Heart left ventricle (tissue), 16 donors: ENCODE measurements at regions of chr13 and their contacts with region 1.

Region 1: GRCh38 chr13:43387880-43388731 is 364.7 kb downstream of the DNAJC15 start:
- DNase-seq: no peak
- ATAC-seq: peak in 2 of 4 donors; percentile 32 to 54
- H3K4me3 ChIP-seq: no peak overlapping the region
- H3K27ac ChIP-seq: no peak overlapping the region
- H3K4me1 ChIP-seq: peaks cover 0 to 10% (median 2%) of the 10 kb centered on the region in 12 donors
- H3K27me3 ChIP-seq: no peaks in the 10 kb centered on the region
- CTCF ChIP-seq: no peak
- POLR2A ChIP-seq: no peak

Region 2: GRCh38 chr13:43094901-43095300 is 293.2 kb before region 1 on chr13:
- intact Hi-C with region 1: no loop called
- DNase-seq: no peak
- ATAC-seq: no peak
- H3K4me3 ChIP-seq: no peak overlapping the region
- H3K27ac ChIP-seq: peak overlapping the region in 1 of 12 donors; percentile 30
- H3K4me1 ChIP-seq: peaks cover 0 to 24% (median 11%) of the 10 kb centered on the region in 12 donors
- H3K27me3 ChIP-seq: no peaks in the 10 kb centered on the region
- CTCF ChIP-seq: no peak
- POLR2A ChIP-seq: no peak

Region 3: GRCh38 chr13:43464578-43465264 is 76.6 kb after region 1 on chr13:
- intact Hi-C with region 1: loop called in 1 of 10 experiments (anchors 2 kb)
- DNase-seq: no peak
- ATAC-seq: no peak
- H3K4me3 ChIP-seq: no peak overlapping the region
- H3K27ac ChIP-seq: no peak overlapping the region
- H3K4me1 ChIP-seq: no peaks in the 10 kb centered on the region
- H3K27me3 ChIP-seq: no peaks in the 10 kb centered on the region
- CTCF ChIP-seq: no peak
- POLR2A ChIP-seq: no peak